Endothelial cell of umbilical vein (primary cell): ENCODE measurements at regions of chr1 and their contacts with region 1.

Region 1: DNA sequence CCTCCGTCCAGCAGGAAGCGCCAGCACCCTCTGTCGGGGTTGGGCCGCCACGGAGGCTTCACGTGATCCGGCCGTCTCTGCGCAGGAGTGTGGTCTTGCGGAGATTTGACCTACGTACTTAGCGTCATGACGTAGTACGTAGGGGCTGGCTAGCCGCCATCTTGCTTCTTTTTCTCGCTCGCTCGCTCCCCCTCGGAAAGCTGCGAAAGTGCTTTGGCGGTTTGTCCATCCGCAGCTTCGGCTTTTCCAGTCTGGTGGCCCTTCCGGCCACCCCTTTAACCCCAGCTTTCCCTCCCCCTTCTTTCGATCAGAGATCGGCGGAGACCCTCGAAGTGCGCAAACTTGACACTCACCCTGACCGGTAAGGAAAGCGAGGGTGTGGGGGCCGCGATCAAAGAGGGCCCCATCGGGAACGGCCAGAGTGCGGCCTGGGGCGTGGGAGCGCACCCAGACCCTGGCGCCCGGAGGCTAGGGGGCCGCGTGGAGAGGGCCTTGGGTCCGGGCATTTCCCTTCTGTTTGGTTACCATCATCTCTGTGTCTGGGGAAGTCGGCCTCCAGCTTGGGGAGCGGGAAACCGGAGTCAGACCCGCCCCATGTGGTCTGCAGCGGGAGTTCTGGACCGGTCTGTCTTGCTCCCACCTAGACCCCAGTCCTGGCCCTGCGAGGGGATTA is at the start of gene PRRC2C:
- DNase-seq: peak; percentile 98
- H3K4me3 ChIP-seq: peak within 1 kb of the TSS; percentile 85 to 92 (median 90)
- H3K27ac ChIP-seq: peak within 1 kb of the TSS; percentile 94
- H3K4me1 ChIP-seq: peaks cover 22% of the 10 kb centered on the region
- H3K27me3 ChIP-seq: no peaks in the 10 kb centered on the region
- CTCF ChIP-seq: peak; percentile 64 to 71
- POLR2A ChIP-seq: peak; percentile 75
- total RNA-seq, gene PRRC2C: 164 and 199 TPM in 2 replicates

Region 2: DNA sequence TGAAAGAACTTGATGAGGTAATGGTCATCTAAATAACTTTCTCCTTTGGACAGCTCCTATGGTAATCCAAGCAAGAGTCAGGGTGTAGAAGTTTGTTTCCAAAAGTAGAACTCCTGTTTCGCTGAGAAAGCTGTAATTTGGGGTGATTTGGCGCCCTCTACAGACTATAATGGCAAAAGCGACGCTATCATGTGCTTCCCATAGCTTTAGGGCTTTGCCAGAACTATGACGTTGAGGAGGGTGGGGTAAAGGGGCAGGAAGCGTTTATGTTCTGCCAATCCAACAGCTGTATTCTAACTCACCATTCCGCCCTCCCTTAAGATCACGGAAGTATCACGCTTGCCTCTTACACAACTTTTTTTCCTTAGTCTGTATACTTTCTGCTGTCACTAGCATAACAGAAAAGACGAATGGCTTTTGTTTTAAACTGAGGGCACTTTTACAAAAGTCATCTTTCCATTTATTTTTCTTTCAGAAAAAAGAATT is 171.6 kb before region 1 on chr1 and contains the start of gene FMO4:
- CTCF ChIA-PET with region 1: interaction called, 17 read pairs
- POLR2A ChIA-PET with region 1: no interaction called
- dilution Hi-C with region 1: no loop called
- intact Hi-C with region 1: loop called (anchors 1 kb)
- DNase-seq: peak; percentile 94
- H3K4me3 ChIP-seq: peak within 1 kb of the TSS in 1 of 3 experiments; percentile 29
- H3K27ac ChIP-seq: no peak within 1 kb of the TSS
- H3K4me1 ChIP-seq: peaks cover 4% of the 10 kb centered on the region
- H3K27me3 ChIP-seq: no peaks in the 10 kb centered on the region
- CTCF ChIP-seq: peak; percentile 76 to 85
- POLR2A ChIP-seq: no peak
- total RNA-seq, gene FMO4: 0.16 and 0.33 TPM in 2 replicates

Region 3: GRCh38 chr1:171434717-171435346 is 50.7 kb before region 1 on chr1:
- CTCF ChIA-PET with region 1: interaction called, 7 read pairs
- POLR2A ChIA-PET with region 1: no interaction called
- dilution Hi-C with region 1: no loop called
- intact Hi-C with region 1: loop called (anchors 1 kb)
- DNase-seq: peak; percentile 84
- H3K4me3 ChIP-seq: peak overlapping the region in 1 of 3 experiments; percentile 47
- H3K27ac ChIP-seq: peak overlapping the region; percentile 91
- H3K4me1 ChIP-seq: peaks cover 13% of the 10 kb centered on the region
- H3K27me3 ChIP-seq: no peaks in the 10 kb centered on the region
- CTCF ChIP-seq: no peak
- POLR2A ChIP-seq: no peak

Region 4: DNA sequence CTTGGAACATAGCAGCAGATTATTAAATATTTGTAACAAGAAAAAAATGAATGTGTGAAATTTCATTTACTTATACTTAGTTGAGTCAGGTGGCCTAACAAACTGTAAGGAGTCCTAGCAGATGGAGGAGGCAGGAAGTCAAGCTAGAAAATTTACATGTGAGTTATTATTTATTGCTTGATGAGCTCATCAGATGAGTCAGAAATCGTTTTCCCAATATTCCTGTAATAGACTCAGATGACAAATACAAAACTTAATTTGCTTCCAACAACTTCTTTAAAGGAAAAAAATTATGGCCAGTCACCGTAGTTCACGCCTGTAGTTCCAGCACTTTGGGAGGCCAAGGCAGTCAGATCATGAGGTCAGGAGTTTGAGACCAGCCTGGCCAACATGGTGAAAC is 44.2 kb before region 1 on chr1:
- CTCF ChIA-PET with region 1: interaction called, 7 read pairs
- POLR2A ChIA-PET with region 1: no interaction called
- dilution Hi-C with region 1: no loop called
- intact Hi-C with region 1: loop called (anchors 1 kb)
- DNase-seq: peak; percentile 74
- H3K4me3 ChIP-seq: no peak overlapping the region
- H3K27ac ChIP-seq: peak overlapping the region; percentile 63
- H3K4me1 ChIP-seq: peaks cover 8% of the 10 kb centered on the region
- H3K27me3 ChIP-seq: no peaks in the 10 kb centered on the region
- CTCF ChIP-seq: no peak
- POLR2A ChIP-seq: no peak

Region 5: DNA sequence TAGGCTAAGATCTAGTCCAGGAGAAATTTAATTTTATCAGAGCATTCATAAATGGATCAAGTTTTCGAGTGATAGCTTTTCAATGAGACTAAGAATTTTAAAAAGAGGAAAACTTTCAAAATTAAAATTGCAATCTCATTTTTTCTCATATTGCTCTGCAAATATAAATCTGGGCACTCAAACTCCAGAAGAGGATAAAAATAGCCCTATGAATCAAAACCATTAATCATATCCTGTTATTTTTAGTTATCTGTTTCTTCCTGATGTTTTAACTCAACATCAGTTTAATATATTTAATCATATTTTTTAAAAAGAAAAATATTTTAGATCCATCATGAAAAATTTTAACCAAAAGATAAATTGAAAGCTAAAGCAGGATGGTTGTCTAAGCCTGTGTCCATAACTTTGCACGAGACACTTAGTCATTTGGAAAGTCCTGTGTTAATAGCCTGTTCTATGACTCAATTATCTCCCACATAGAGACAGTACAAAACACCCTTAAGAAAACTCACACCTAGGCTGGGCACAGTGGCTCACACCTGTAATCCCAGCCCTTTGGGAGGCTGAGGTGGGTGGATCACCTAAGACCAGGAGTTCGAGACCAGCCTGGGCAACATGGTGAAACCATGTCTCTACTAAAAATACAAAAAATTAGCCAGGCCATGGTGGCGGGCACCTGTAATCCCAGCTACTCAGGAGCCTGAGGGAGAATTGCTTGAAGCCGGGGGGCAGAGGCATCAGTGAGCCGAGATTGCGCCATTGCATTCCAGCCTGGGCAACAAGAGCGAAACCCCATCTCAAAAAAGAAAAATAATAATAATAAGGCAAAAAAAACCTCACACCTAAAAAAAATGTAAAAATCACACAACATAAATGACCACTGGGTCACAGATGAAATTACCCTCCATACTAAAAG is 17.1 kb before region 1 on chr1:
- CTCF ChIA-PET with region 1: interaction called, 5 read pairs
- POLR2A ChIA-PET with region 1: no interaction called
- dilution Hi-C with region 1: no loop called
- intact Hi-C with region 1: loop called (anchors 2 kb)
- DNase-seq: peak; percentile 27
- H3K4me3 ChIP-seq: no peak overlapping the region
- H3K27ac ChIP-seq: peak overlapping the region; percentile 7
- H3K4me1 ChIP-seq: peaks cover 10% of the 10 kb centered on the region
- H3K27me3 ChIP-seq: no peaks in the 10 kb centered on the region
- CTCF ChIP-seq: no peak
- POLR2A ChIP-seq: no peak

Region 6: DNA sequence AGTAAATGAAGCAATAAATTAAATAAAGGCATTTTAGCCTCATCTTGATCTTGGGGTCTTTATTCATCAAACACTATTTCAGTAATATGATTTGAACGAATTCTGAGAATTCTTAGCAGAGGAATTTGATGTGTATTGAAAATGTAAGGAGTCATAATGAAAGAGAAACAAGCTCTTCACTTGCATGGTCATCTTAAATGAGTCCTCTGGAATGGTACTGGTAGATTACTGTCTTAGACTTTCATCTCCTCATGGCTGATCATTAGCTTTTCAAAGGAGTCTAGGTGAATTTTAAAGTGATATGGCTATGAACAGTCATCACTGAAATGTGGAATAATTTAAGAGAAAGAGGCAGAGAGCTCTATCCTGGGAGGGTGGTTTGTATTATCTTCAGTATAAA is 29.8 kb after region 1 on chr1:
- CTCF ChIA-PET with region 1: interaction called, 12 read pairs
- POLR2A ChIA-PET with region 1: no interaction called
- dilution Hi-C with region 1: no loop called
- intact Hi-C with region 1: no loop called
- DNase-seq: no peak
- H3K4me3 ChIP-seq: no peak overlapping the region
- H3K27ac ChIP-seq: no peak overlapping the region
- H3K4me1 ChIP-seq: no peaks in the 10 kb centered on the region
- H3K27me3 ChIP-seq: no peaks in the 10 kb centered on the region
- CTCF ChIP-seq: no peak
- POLR2A ChIP-seq: no peak

Region 7: GRCh38 chr1:171590022-171590421 is 104.5 kb after region 1 on chr1:
- CTCF ChIA-PET with region 1: no interaction called
- POLR2A ChIA-PET with region 1: no interaction called
- dilution Hi-C with region 1: no loop called
- intact Hi-C with region 1: no loop called
- DNase-seq: no peak
- H3K4me3 ChIP-seq: no peak overlapping the region
- H3K27ac ChIP-seq: no peak overlapping the region
- H3K4me1 ChIP-seq: no peaks in the 10 kb centered on the region
- H3K27me3 ChIP-seq: no peaks in the 10 kb centered on the region
- CTCF ChIP-seq: no peak
- POLR2A ChIP-seq: no peak

Region 8: GRCh38 chr1:171781176-171781875 is 295.8 kb after region 1 on chr1 and contains the start of gene METTL13:
- CTCF ChIA-PET with region 1: no interaction called
- POLR2A ChIA-PET with region 1: no interaction called
- dilution Hi-C with region 1: no loop called
- intact Hi-C with region 1: loop called (anchors 2 kb)
- DNase-seq: peak; percentile 100
- H3K4me3 ChIP-seq: peak within 1 kb of the TSS; percentile 69 to 85 (median 81)
- H3K27ac ChIP-seq: peak within 1 kb of the TSS; percentile 66
- H3K4me1 ChIP-seq: peaks cover 7% of the 10 kb centered on the region
- H3K27me3 ChIP-seq: peaks cover 0 to 1% of the 10 kb centered on the region in 2 experiments
- CTCF ChIP-seq: no peak
- POLR2A ChIP-seq: peak; percentile 65
- total RNA-seq, gene METTL13: 26.5 and 29.7 TPM in 2 replicates

Region 9: GRCh38 chr1:173103006-173103405 is 1617.5 kb after region 1 on chr1:
- CTCF ChIA-PET with region 1: no interaction called
- POLR2A ChIA-PET with region 1: no interaction called
- dilution Hi-C with region 1: no loop called
- intact Hi-C with region 1: no loop called
- DNase-seq: no peak
- H3K4me3 ChIP-seq: no peak overlapping the region
- H3K27ac ChIP-seq: no peak overlapping the region
- H3K4me1 ChIP-seq: no peaks in the 10 kb centered on the region
- H3K27me3 ChIP-seq: no peaks in the 10 kb centered on the region
- CTCF ChIP-seq: no peak
- POLR2A ChIP-seq: no peak